ENCODE measurements at regions of chr10 and their contacts with region 1.

Region 1: DNA sequence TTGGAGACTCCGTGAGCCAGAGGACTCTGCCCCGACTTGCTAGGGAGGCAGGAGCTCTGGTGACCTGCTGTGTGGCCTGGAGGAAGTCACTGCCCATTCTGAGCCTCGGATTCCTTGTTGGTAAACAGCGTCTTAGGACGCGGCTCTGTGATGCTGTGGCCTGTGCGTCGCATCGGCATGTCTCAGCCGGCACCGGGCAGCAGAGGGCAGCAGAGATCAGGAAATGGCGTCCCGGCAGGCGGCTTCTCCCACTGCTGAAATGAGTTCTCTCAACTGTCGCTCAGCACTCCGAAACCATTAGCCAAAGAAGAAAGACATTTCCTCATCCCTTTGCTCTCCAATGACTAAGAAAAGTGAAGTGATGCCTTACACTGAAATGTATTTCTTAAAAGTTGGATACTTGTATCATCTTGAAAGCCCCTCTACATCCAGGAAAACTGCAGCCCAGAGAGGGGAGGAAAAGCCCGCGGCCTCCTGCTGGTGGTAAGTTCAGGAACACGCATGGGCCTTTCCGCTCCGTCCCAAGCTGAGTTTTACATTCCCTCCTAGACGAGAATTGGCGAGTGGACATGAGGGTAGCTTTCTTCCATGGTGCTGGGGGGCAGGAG is 91.7 kb downstream of the WDR11 start:
- DNase-seq: peak; percentile 78 to 83 (median 79)
- ATAC-seq: peak; percentile 94 to 98 (median 96)
- H3K4me3 ChIP-seq: no peak overlapping the region
- H3K27ac ChIP-seq: no peak overlapping the region
- H3K4me1 ChIP-seq: no peaks in the 10 kb centered on the region
- H3K27me3 ChIP-seq: no peaks in the 10 kb centered on the region
- CTCF ChIP-seq: peak; percentile 87 to 88 (median 87)
- POLR2A ChIP-seq: no peak

Region 2: GRCh38 chr10:120805014-120805812 is 137.7 kb before region 1 on chr10:
- intact Hi-C with region 1: no loop called
- DNase-seq: no peak
- ATAC-seq: no peak
- H3K4me3 ChIP-seq: no peak overlapping the region
- H3K27ac ChIP-seq: no peak overlapping the region
- H3K4me1 ChIP-seq: no peaks in the 10 kb centered on the region
- H3K27me3 ChIP-seq: no peaks in the 10 kb centered on the region
- CTCF ChIP-seq: no peak
- POLR2A ChIP-seq: no peak

Region 3: DNA sequence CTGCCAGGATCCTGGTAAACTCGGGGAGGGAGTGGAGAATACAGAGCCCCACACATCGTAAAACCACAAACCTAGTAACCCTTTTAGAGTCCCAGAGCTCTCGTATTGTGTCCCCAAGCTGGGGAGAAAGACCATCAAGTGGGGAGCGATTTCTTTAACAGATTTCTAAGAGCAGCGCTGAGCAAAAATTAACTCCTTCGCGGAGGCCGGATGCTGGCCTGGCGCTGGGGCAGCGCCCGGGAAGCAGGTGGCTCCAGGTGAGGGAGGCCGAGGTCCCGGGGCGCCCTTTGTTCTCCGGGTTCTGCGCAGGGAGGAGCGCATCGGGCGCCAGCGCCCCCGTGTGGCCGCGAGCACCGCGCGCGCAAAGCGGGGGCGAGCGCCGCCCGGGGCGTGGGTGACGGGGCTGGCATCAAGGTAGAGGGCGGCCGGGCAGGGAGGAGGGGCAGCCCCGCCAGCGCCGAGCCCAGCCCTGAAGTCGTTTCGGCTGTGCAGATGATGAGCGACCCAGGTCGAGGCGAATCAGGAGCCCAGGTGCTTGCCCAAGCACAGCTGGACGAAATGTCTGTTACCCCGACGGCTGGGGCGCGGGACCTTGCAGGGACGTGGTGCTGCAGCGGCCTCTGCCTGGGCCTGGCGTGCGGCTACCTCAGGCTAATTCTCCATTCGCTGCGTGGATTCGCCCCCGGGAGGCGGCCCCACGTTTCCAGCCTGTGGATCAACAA is 665.7 kb after region 1 on chr10:
- intact Hi-C with region 1: loop called in 1 of 2 experiments (anchors 10 kb)
- DNase-seq: peak in 2 of 3 donors; percentile 60 to 68
- ATAC-seq: peak; percentile 89 to 95 (median 92)
- H3K4me3 ChIP-seq: peak overlapping the region in 2 of 3 donors; percentile 6 to 31
- H3K27ac ChIP-seq: no peak overlapping the region
- H3K4me1 ChIP-seq: peaks cover 0 to 11% (median 0%) of the 10 kb centered on the region in 4 donors
- H3K27me3 ChIP-seq: no peaks in the 10 kb centered on the region
- CTCF ChIP-seq: peak; percentile 91 to 97 (median 96)
- POLR2A ChIP-seq: no peak

Region 4: GRCh38 chr10:121734589-121735045 is 791.7 kb after region 1 on chr10:
- intact Hi-C with region 1: loop called (anchors 5 to 10 kb)
- DNase-seq: no peak
- ATAC-seq: peak; percentile 41 to 58 (median 47)
- H3K4me3 ChIP-seq: no peak overlapping the region
- H3K27ac ChIP-seq: no peak overlapping the region
- H3K4me1 ChIP-seq: no peaks in the 10 kb centered on the region
- H3K27me3 ChIP-seq: no peaks in the 10 kb centered on the region
- CTCF ChIP-seq: peak; percentile 42 to 76 (median 72)
- POLR2A ChIP-seq: no peak

Region 5: GRCh38 chr10:121886997-121887622 is 944.2 kb after region 1 on chr10:
- intact Hi-C with region 1: loop called in 1 of 2 experiments (anchors 10 kb)
- DNase-seq: peak in 2 of 3 donors; percentile 53
- ATAC-seq: peak; percentile 97 to 99 (median 98)
- H3K4me3 ChIP-seq: no peak overlapping the region
- H3K27ac ChIP-seq: no peak overlapping the region
- H3K4me1 ChIP-seq: no peaks in the 10 kb centered on the region
- H3K27me3 ChIP-seq: no peaks in the 10 kb centered on the region
- CTCF ChIP-seq: peak; percentile 69 to 85 (median 82)
- POLR2A ChIP-seq: no peak

Measured in right lobe of liver (tissue), 6 donors.